Natural killer cell (primary cell): ENCODE measurements at regions of chr4 and their contacts with region 1.

Region 1: DNA sequence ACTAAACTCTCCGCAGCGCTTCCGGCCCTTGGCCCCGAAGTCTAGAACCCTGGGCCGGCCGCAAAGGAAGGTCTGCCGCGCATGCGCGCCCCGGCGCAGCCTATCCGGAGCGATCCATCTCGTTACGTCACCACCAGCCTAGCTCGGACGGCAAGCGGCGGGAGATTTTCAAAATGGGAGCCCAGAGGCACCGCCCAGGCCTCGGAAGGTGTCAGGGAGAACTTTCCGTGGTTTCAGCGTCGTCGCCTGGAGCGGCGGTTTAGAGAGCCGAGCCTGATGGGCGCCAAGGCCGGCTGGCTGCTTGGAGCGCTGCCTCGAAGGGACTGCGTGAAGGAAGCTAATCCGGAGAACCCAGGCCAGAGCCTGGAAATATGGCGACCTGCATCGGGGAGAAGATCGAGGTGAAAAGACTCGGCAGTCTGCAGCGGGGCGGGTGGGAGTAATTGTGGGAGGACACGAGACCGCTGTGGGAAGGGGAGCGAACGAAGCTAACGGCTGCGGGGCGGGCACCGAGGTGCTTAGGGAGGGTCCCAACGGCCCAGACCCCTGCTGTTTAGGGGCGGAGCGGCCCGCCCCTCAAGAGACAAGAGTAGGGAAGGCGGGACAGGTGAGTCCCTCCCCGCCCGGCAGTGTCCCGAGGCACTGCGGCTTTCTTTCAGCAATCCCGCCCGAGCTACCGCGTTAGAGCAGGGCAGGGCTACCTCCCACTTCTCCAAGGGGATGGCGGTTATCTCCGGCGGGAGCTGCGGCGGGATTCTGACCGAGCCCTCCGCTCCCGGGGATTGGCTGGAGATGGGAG is at the start of gene PLK4:
- DNase-seq: peak; percentile 93 to 98
- ATAC-seq: peak; percentile 93 to 97 (median 94)
- H3K4me3 ChIP-seq: peak within 1 kb of the TSS; percentile 95
- H3K4me3 Mint-ChIP-seq: peak within 1 kb of the TSS; percentile 98
- H3K27ac ChIP-seq: peak within 1 kb of the TSS; percentile 90
- H3K27ac Mint-ChIP-seq: peak within 1 kb of the TSS; percentile 96 to 99
- H3K4me1 ChIP-seq: peaks cover 12% of the 10 kb centered on the region
- H3K4me1 Mint-ChIP-seq: peaks cover 15 to 16% of the 10 kb centered on the region in 2 donors
- H3K27me3 ChIP-seq: no peaks in the 10 kb centered on the region
- H3K27me3 Mint-ChIP-seq: no peaks in the 10 kb centered on the region
- CTCF ChIP-seq: no peak
- total RNA-seq, gene PLK4: 3.9 to 7.3 (median 5.4) TPM

Region 2: GRCh38 chr4:127965062-127965802 is 84.3 kb after region 1 on chr4 and contains the starts of genes ABHD18 and MFSD8:
- intact Hi-C with region 1: loop called (anchors 2 kb)
- DNase-seq: peak; percentile 95 to 100
- ATAC-seq: peak; percentile 91 to 98 (median 93)
- H3K4me3 ChIP-seq: peak within 1 kb of the TSS; percentile 85
- H3K4me3 Mint-ChIP-seq: peak within 1 kb of the TSS; percentile 97
- H3K27ac ChIP-seq: peak within 1 kb of the TSS; percentile 87
- H3K27ac Mint-ChIP-seq: peak within 1 kb of the TSS; percentile 95 to 98
- H3K4me1 ChIP-seq: peaks cover 16% of the 10 kb centered on the region
- H3K4me1 Mint-ChIP-seq: peaks cover 30 to 32% of the 10 kb centered on the region in 2 donors
- H3K27me3 ChIP-seq: no peaks in the 10 kb centered on the region
- H3K27me3 Mint-ChIP-seq: no peaks in the 10 kb centered on the region
- CTCF ChIP-seq: peak; percentile 25
- total RNA-seq, gene ABHD18: 16.0 to 21.9 (median 17.6) TPM
- total RNA-seq, gene MFSD8: 25.9 to 34.0 (median 25.9) TPM

Region 3: GRCh38 chr4:128060699-128061565 is 180.0 kb after region 1 on chr4 and contains the start of gene LARP1B:
- intact Hi-C with region 1: loop called (anchors 5 kb)
- DNase-seq: peak; percentile 89 to 94
- ATAC-seq: peak; percentile 88 to 96 (median 89)
- H3K4me3 ChIP-seq: peak within 1 kb of the TSS; percentile 40
- H3K4me3 Mint-ChIP-seq: peak within 1 kb of the TSS; percentile 85
- H3K27ac ChIP-seq: peak within 1 kb of the TSS; percentile 90
- H3K27ac Mint-ChIP-seq: peak within 1 kb of the TSS; percentile 77 to 80
- H3K4me1 ChIP-seq: peaks cover 15% of the 10 kb centered on the region
- H3K4me1 Mint-ChIP-seq: peaks cover 9 to 10% of the 10 kb centered on the region in 2 donors
- H3K27me3 ChIP-seq: no peaks in the 10 kb centered on the region
- H3K27me3 Mint-ChIP-seq: no peaks in the 10 kb centered on the region
- CTCF ChIP-seq: no peak
- total RNA-seq, gene LARP1B: 8.5 to 10.7 (median 9.1) TPM

Region 4: GRCh38 chr4:128287871-128288688 is 407.1 kb after region 1 on chr4:
- intact Hi-C with region 1: loop called (anchors 5 kb)
- DNase-seq: peak; percentile 97 to 100
- ATAC-seq: peak; percentile 84 to 94 (median 85)
- H3K4me3 ChIP-seq: peak overlapping the region; percentile 87
- H3K4me3 Mint-ChIP-seq: peak overlapping the region; percentile 93
- H3K27ac ChIP-seq: peak overlapping the region; percentile 97
- H3K27ac Mint-ChIP-seq: peak overlapping the region; percentile 85 to 90
- H3K4me1 ChIP-seq: peaks cover 16% of the 10 kb centered on the region
- H3K4me1 Mint-ChIP-seq: peaks cover 34 to 35% of the 10 kb centered on the region in 2 donors
- H3K27me3 ChIP-seq: no peaks in the 10 kb centered on the region
- H3K27me3 Mint-ChIP-seq: peaks cover 0 to 2% of the 10 kb centered on the region in 2 donors
- CTCF ChIP-seq: no peak